Adrenal gland (tissue), 19 donors: ENCODE measurements at regions of chr6 and their contacts with region 1.

Region 1: DNA sequence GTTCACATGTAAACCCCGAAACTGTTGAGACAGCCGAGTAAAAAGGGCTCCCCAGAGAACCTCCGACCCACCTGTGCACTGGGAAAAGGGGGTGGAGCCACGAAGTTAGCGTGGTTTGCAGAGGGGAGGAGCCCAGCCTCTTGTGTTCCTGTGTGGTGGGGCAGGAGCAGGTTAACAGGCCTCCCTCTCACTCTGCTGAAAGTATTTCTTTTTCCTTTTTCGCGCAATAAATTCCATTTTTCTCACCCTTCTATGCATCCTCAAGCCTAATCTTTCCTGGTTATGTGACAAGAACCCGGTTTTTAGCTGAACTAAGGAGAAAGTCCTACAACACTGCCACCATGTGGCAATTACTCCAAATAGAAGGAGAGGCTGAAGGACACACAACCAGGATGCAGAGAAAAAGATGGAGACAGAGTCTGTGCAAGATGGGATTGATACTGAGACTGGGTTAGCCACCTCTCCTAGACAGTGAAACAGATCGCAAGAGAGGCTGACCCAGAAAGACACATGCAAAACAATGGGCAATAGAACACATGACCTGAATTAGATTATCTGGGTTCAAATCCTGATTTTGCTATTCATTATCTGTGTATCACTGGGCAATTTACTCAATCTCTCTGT is 168.7 kb upstream of the PRSS16 start:
- DNase-seq: peak; percentile 20 to 65 (median 49)
- H3K4me3 ChIP-seq: peak overlapping the region in 1 of 4 donors; percentile 19
- H3K27ac ChIP-seq: no peak overlapping the region
- H3K4me1 ChIP-seq: peaks cover 0 to 5% of the 10 kb centered on the region in 2 donors
- H3K27me3 ChIP-seq: peaks cover 14% of the 10 kb centered on the region
- CTCF ChIP-seq: peak; percentile 37 to 81 (median 74)
- POLR2A ChIP-seq: no peak

Region 2: DNA sequence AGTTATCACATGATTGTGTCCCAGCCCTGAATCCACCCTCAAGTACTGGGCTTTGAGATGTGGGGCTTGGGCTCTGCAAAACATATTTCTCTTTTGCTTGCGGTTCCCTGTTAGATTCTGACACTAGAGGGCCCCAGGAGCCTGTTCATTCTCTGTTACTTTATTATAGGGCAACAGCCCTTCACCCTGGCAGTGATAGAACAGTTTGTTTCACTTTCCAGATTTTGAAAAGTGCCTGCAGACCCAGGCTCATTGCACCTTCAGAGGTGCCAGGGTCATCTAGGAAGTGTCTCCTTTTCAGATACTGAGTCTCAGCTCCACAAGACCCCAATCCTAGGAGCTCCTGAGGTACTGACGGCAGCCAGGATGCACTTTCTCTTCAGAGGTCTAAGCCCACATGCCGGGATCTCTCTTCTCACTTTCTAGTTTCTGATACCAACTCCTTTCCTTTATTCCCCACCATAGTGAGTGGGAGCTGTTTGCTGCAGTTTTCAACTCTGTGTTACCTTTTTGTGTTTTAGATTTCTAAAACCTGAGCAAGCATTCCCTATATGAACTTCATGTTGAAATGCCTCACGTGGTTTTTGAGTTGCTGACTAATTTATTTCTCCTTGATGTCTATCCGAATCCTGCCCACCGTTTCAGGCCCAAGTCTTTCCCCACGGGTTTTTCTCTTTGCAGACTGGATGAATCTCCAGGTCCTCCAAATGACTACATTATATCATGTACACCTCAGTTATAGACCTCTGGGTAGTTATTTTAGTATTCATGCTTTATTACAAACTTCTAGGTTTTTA is 471.2 kb before region 1 on chr6:
- intact Hi-C with region 1: loop called (anchors 2 kb)
- DNase-seq: peak; percentile 41 to 75 (median 54)
- H3K4me3 ChIP-seq: peak overlapping the region in 1 of 4 donors; percentile 30
- H3K27ac ChIP-seq: no peak overlapping the region
- H3K4me1 ChIP-seq: no peaks in the 10 kb centered on the region
- H3K27me3 ChIP-seq: no peaks in the 10 kb centered on the region
- CTCF ChIP-seq: peak; percentile 47 to 76 (median 67)
- POLR2A ChIP-seq: no peak